ENCODE measurements at regions of chr14 and their contacts with region 1.

Region 1: DNA sequence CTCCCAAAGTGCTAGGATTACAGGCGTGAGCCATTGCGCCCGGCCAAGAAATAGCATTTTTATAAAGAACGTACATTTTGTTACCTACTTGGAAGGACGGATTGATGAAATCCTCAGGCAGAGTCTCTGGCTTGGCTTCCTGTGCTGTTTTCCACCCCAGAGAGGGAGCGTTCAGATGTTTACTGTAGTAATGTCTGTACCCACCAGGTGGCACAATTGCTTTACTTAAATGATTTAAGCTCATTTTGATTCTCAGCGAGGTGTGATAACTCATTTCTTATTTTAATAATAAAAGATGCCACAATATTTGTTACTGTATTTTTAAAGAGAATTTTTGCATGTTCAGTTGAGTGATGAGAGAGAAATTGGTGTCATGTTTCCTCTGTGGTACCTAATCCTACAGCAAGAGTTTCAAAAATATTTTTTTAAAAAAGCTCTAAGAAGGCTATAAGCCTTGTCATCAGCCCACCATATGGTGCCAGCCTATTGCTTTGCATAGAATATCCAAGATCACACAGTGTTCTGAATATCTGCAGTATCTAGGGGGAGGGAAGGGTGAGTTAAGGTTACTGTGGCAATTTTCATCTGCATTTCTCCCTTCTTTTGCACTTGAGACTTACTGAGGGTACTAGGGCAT is 82.6 kb upstream of the TRAF3 start:
- DNase-seq: peak in 1 of 2 donors; percentile 61
- H3K4me3 ChIP-seq: no peak overlapping the region
- H3K27ac ChIP-seq: no peak overlapping the region
- H3K4me1 ChIP-seq: peaks cover 0 to 19% (median 6%) of the 10 kb centered on the region in 4 donors
- H3K27me3 ChIP-seq: no peaks in the 10 kb centered on the region
- CTCF ChIP-seq: peak; percentile 64 to 72

Region 2: GRCh38 chr14:102608064-102608446 is 86.6 kb before region 1 on chr14:
- intact Hi-C with region 1: loop called (anchors 10 kb)
- DNase-seq: no peak
- H3K4me3 ChIP-seq: no peak overlapping the region
- H3K27ac ChIP-seq: no peak overlapping the region
- H3K4me1 ChIP-seq: peaks cover 0 to 33% (median 7%) of the 10 kb centered on the region in 4 donors
- H3K27me3 ChIP-seq: no peaks in the 10 kb centered on the region
- CTCF ChIP-seq: no peak

Region 3: GRCh38 chr14:102824832-102825231 is 130.2 kb after region 1 on chr14:
- intact Hi-C with region 1: no loop called
- DNase-seq: no peak
- H3K4me3 ChIP-seq: no peak overlapping the region
- H3K27ac ChIP-seq: no peak overlapping the region
- H3K4me1 ChIP-seq: peaks cover 0 to 5% (median 0%) of the 10 kb centered on the region in 4 donors
- H3K27me3 ChIP-seq: no peaks in the 10 kb centered on the region
- CTCF ChIP-seq: no peak

Region 4: DNA sequence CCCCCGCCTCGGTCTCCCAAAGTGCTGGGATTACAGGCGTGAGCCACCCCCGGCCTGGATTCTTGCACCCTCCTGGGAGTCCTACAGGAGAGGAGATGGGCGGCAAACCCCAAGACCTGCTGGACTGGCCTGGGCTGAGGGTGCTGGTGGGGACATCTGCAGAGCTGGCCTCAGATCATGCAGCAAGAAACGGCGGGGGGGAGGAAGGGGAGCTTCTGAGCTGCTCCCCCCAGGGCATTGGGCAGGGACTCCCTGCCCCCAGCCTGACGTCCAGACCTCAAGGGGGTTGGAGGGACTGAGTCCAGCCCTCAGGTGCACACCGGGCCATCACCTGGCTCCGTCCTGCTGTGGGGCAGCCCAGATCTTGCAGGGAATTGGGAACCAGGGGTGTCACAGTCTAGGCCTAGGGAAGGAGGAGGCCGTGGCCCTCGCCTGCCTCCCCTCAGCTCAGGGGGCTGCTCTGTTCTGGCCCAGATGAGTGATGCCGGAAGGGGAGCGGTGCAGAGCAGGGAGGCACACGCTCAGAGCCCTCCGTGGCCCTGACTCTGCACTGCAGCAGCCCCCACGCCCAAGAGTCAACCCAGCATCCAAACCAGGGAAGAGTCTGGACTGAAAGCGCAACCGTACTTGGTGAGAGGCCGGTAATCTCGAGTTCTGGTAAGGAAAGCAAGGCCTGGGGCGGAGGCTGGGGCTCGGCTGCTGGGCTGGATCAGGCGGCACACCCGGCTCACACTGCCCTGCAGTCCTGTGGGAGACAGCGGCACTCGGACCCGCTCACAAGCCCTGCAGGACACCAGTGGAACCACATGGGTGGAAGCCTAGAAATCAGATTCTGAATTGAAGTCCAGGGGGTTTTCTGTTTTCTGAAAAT is 218.9 kb after region 1 on chr14:
- intact Hi-C with region 1: loop called (anchors 5 kb)
- DNase-seq: peak in 1 of 2 donors; percentile 65
- H3K4me3 ChIP-seq: no peak overlapping the region
- H3K27ac ChIP-seq: no peak overlapping the region
- H3K4me1 ChIP-seq: no peaks in the 10 kb centered on the region
- H3K27me3 ChIP-seq: no peaks in the 10 kb centered on the region
- CTCF ChIP-seq: no peak

Measured in tibial artery (tissue), 4 donors.